ENCODE measurements at regions of chr17 and their contacts with region 1.

Region 1: GRCh38 chr17:18314731-18315561 is at the starts of genes SMCR8 and TOP3A:
- DNase-seq: peak; percentile 99
- H3K4me3 Mint-ChIP-seq: peak within 1 kb of the TSS; percentile 85
- H3K27ac Mint-ChIP-seq: peak within 1 kb of the TSS; percentile 98
- H3K4me1 Mint-ChIP-seq: peaks cover 65% of the 10 kb centered on the region
- H3K27me3 Mint-ChIP-seq: no peaks in the 10 kb centered on the region
- total RNA-seq, gene SMCR8: 17.3 and 17.7 TPM in 2 replicates
- total RNA-seq, gene TOP3A: 75.4 and 88.2 TPM in 2 replicates

Region 2: GRCh38 chr17:17836250-17836817 is 478.6 kb before region 1 on chr17:
- intact Hi-C with region 1: loop called (anchors 5 kb)
- DNase-seq: peak; percentile 99
- H3K4me3 Mint-ChIP-seq: peak overlapping the region; percentile 98
- H3K27ac Mint-ChIP-seq: peak overlapping the region; percentile 95
- H3K4me1 Mint-ChIP-seq: peaks cover 68% of the 10 kb centered on the region
- H3K27me3 Mint-ChIP-seq: no peaks in the 10 kb centered on the region

Region 3: DNA sequence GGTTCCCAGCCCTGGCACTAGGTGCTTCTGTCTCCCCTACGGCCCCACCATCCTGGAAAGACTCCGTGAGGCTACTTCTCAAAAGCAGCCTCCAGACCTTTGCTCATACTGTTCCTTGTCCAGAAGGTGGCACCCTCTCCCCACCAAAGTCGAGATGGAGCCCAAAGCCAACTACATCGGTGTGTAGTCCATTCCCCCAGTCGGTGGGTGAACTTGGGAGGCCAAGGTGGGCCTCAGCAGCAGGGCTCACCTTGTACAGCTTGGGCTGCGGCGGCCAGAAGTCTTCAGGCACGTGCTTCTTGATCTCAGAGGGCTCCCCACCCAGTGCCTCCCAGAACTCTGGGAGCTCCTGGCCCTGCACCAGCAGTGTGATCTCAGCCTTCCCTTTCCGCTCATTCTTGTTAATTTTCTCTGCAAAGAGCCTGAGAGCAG is 66.6 kb before region 1 on chr17:
- intact Hi-C with region 1: loop called (anchors 2 kb)
- DNase-seq: peak; percentile 90
- H3K4me3 Mint-ChIP-seq: no peak overlapping the region
- H3K27ac Mint-ChIP-seq: no peak overlapping the region
- H3K4me1 Mint-ChIP-seq: peaks cover 6% of the 10 kb centered on the region
- H3K27me3 Mint-ChIP-seq: no peaks in the 10 kb centered on the region

Region 4: GRCh38 chr17:18260332-18261144 is 54.4 kb before region 1 on chr17 and contains the start of gene MIEF2:
- intact Hi-C with region 1: loop called (anchors 1 kb)
- DNase-seq: peak; percentile 98
- H3K4me3 Mint-ChIP-seq: peak within 1 kb of the TSS; percentile 85
- H3K27ac Mint-ChIP-seq: peak within 1 kb of the TSS; percentile 86
- H3K4me1 Mint-ChIP-seq: peaks cover 29% of the 10 kb centered on the region
- H3K27me3 Mint-ChIP-seq: no peaks in the 10 kb centered on the region
- total RNA-seq, gene MIEF2: 4.3 and 6.0 TPM in 2 replicates

Region 5: GRCh38 chr17:18300725-18301480 is 14.0 kb before region 1 on chr17:
- intact Hi-C with region 1: loop called (anchors 2 kb)
- DNase-seq: no peak
- H3K4me3 Mint-ChIP-seq: no peak overlapping the region
- H3K27ac Mint-ChIP-seq: no peak overlapping the region
- H3K4me1 Mint-ChIP-seq: no peaks in the 10 kb centered on the region
- H3K27me3 Mint-ChIP-seq: no peaks in the 10 kb centered on the region

Region 6: DNA sequence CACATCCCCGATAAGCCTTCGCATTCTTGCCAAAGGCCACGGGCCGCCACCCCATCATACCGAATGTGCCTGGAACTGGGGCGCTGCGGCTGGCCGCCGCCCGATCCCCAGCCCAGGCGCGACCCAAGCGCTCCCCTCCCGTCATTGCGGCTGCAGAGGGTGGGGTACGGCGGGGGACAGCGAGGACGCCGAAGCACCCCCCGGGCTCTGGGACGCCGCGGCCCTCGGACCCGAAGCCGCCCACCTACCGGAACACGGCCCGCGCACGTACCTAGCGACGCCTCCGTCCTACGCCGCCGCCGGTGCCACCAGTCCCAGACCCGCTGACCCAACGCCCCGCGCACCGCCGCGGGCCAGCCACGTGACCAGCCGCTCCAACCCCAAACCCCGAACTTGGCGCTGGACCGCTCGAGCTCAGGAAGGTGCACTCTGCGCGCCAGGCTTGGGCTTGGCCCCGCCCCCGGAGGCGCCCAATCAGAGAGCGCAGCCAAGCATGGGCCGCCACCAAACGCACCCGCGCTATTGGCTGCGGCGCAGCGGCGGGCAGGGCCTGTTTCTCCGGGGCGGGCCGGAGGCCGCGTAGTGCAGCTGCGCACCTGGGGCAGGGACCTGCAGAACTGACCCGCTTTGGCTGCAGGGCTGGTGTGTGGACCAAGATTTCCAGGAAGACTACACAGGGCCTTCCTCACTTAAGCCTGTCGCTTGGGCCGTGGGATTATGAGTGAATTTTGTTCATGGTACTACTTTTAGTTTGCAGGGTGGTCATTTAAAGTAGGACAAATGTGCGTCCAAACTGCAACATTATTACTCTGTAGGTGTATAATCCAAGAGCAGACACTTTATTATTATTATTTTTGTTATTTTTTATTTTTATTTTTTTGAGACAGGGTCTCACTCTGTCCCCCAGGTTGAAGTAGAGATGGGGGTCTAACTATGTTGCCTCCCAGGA is 48.4 kb after region 1 on chr17 and contains the start of gene SHMT1:
- intact Hi-C with region 1: loop called (anchors 5 kb)
- DNase-seq: peak; percentile 98
- H3K4me3 Mint-ChIP-seq: peak within 1 kb of the TSS; percentile 93
- H3K27ac Mint-ChIP-seq: peak within 1 kb of the TSS; percentile 91
- H3K4me1 Mint-ChIP-seq: peaks cover 15% of the 10 kb centered on the region
- H3K27me3 Mint-ChIP-seq: no peaks in the 10 kb centered on the region
- total RNA-seq, gene SHMT1: 58.3 and 62.1 TPM in 2 replicates